ENCODE measurements at regions of chr20 and their contacts with region 1.

Region 1: DNA sequence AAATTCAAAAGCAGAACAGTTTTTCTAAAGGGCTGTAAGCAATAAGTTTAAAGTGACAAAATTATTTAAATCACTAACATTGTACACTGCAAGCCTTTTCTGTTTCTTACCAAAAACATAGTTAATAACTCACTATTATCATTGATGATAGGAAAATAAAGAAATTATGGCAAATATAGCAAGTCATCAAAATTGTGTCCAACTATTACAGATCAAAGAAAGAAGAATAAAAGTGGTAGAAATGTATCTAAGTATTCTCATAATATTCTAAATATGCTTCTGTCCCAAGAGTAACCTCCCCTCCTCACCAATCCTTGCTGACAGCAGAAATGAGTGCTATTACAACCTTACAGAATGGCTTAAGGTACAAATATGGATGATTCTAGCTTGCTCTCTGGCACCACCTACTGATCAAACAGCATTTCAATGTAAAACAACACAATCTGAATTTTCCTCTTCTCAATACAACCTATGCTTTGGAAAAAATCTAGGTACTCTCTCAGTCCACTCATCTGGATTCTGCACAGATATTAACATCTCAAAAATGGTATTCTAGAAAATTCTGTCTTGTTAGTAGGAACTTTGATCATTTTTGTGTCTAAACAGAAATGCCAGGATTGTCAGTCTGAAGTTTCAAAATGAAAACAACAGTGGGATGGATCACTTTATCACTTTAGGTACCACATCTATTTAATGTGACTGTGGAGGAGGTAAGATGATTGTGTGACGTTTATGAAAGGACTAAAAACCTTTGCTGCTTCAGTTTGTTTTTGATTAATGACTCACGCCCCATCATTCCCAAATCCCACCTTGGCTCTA is 40.9 kb downstream of the ZFP64 start:
- DNase-seq: peak in 5 of 9 donors; percentile 9 to 27 (median 26)
- ATAC-seq: peak; percentile 65
- H3K4me3 ChIP-seq: no peak overlapping the region
- H3K4me3 Mint-ChIP-seq: no peak overlapping the region
- H3K27ac ChIP-seq: no peak overlapping the region
- H3K27ac Mint-ChIP-seq: peak overlapping the region in 1 of 9 donors; percentile 1
- H3K4me1 ChIP-seq: no peaks in the 10 kb centered on the region
- H3K4me1 Mint-ChIP-seq: peaks cover 0 to 2% (median 0%) of the 10 kb centered on the region in 7 donors
- H3K27me3 ChIP-seq: no peaks in the 10 kb centered on the region
- H3K27me3 Mint-ChIP-seq: no peaks in the 10 kb centered on the region

Region 2: GRCh38 chr20:51562332-51563155 is 588.1 kb before region 1 on chr20:
- CTCF ChIA-PET with region 1: no interaction called
- POLR2A ChIA-PET with region 1: no interaction called
- intact Hi-C with region 1: no loop called
- DNase-seq: peak in 5 of 9 donors; percentile 12 to 32 (median 21)
- ATAC-seq: peak; percentile 32
- H3K4me3 ChIP-seq: peak overlapping the region; percentile 49
- H3K4me3 Mint-ChIP-seq: peak overlapping the region; percentile 66 to 84 (median 74)
- H3K27ac ChIP-seq: no peak overlapping the region
- H3K27ac Mint-ChIP-seq: no peak overlapping the region
- H3K4me1 ChIP-seq: peaks cover 9 to 11% of the 10 kb centered on the region in 2 donors
- H3K4me1 Mint-ChIP-seq: peaks cover 10 to 36% (median 19%) of the 10 kb centered on the region in 7 donors
- H3K27me3 ChIP-seq: peaks cover 16 to 37% of the 10 kb centered on the region in 2 donors
- H3K27me3 Mint-ChIP-seq: peaks cover 38 to 78% (median 53%) of the 10 kb centered on the region in 5 donors

Region 3: GRCh38 chr20:52127309-52127708 is 23.3 kb before region 1 on chr20:
- CTCF ChIA-PET with region 1: interaction called, 4 read pairs
- POLR2A ChIA-PET with region 1: no interaction called
- intact Hi-C with region 1: loop called (anchors 1 kb)
- DNase-seq: no peak
- ATAC-seq: no peak
- H3K4me3 ChIP-seq: no peak overlapping the region
- H3K4me3 Mint-ChIP-seq: no peak overlapping the region
- H3K27ac ChIP-seq: no peak overlapping the region
- H3K27ac Mint-ChIP-seq: peak overlapping the region in 1 of 9 donors; percentile 3
- H3K4me1 ChIP-seq: no peaks in the 10 kb centered on the region
- H3K4me1 Mint-ChIP-seq: peaks cover 0 to 8% (median 2%) of the 10 kb centered on the region in 7 donors
- H3K27me3 ChIP-seq: no peaks in the 10 kb centered on the region
- H3K27me3 Mint-ChIP-seq: peaks cover 0 to 3% (median 0%) of the 10 kb centered on the region in 5 donors

Region 4: GRCh38 chr20:52256454-52256853 is 105.8 kb after region 1 on chr20:
- CTCF ChIA-PET with region 1: no interaction called
- POLR2A ChIA-PET with region 1: no interaction called
- intact Hi-C with region 1: no loop called
- DNase-seq: no peak
- ATAC-seq: no peak
- H3K4me3 ChIP-seq: no peak overlapping the region
- H3K4me3 Mint-ChIP-seq: no peak overlapping the region
- H3K27ac ChIP-seq: no peak overlapping the region
- H3K27ac Mint-ChIP-seq: no peak overlapping the region
- H3K4me1 ChIP-seq: no peaks in the 10 kb centered on the region
- H3K4me1 Mint-ChIP-seq: peaks cover 0 to 4% (median 0%) of the 10 kb centered on the region in 7 donors
- H3K27me3 ChIP-seq: no peaks in the 10 kb centered on the region
- H3K27me3 Mint-ChIP-seq: peaks cover 0 to 10% (median 0%) of the 10 kb centered on the region in 5 donors